ENCODE measurements at regions of chr3 and their contacts with region 1.

Region 1: DNA sequence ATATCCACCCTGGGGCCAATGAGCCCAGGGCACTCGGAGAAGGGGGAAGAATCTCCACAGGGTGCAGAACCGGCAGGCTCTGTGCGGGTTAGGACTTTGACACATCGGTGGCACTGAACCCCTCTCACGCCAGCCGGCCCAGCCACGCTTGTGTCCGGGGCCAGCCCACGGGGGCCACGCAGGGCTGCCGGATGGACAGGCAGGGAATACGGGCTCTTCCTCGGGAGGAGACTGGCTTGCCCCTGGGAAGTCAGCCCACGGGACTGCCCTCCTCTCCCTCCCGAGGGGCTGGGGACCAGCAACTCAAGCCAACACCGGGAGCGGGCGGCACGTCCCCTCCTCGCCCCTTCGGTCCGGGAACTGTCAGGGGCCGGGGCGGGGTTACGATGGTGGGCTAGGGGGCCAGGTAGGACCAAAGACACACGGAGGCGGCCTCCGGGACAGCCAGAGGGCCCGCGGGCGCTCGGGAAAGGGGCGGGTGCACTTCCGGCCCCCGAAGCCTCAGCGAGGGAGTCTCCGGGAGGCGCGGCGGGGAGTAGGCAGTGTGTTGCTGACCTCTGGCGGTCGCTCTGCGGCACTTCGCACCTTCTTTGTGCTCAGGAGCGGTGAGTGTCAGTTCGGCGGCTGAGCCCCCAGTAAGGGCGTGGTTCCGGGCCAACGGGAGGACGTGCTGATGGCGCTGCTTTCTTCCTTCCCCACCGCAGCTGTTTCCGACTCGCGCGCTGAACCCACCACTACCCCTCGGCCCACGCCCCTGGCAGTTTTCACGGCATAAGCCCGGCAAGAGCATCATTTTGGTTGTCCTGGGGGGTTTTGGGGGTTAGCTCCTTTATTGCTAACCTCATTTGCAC is 5.1 kb upstream of the CYP8B1 start:
- DNase-seq: peak; percentile 72 to 87 (median 80)
- H3K4me3 ChIP-seq: peak overlapping the region; percentile 50 to 99 (median 79)
- H3K27ac ChIP-seq: peak overlapping the region in 32 of 59 donors; percentile 8 to 88 (median 50)
- H3K27me3 ChIP-seq: no peaks in the 10 kb centered on the region
- CTCF ChIP-seq: peak; percentile 82 to 98 (median 94)

Region 2: DNA sequence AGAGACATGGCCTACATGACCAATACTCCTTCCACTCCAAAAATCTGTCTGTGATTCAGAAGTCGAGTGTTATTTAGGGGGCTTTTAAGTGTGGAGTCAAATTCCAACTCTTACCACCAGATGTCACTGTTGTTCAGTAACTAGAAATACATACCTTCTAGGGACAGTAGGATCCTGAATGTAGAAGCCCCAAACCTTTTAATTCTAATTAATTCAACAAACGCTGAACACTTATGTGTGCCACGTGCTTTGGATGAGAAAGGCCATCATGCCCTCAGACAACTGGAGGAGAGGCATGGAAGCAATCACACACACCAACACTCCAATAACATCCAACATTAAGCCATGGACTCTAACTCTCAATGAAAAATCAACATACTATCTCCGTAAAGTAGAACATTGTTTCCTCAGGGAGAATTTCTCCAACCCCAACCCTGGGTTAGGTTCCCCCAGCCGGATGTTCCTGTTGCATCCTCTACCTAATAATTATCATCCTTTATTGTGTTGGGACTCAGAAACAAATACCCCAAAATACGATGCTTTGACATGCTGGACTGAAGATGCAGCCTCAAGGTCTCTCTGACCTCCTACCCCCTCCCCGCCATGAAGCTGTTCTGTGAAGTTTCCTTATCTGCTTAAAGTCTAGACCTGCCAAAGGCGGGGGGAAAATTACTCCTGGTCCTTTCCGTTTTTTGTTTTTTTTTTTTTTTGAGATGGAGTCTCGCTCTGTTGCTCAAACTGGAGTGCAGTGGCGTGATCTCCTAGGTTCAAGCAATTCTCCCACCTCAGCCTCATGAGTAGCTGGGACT is 99.7 kb before region 1 on chr3:
- intact Hi-C with region 1: loop called (anchors 1 to 2 kb)
- DNase-seq: no peak
- H3K4me3 ChIP-seq: no peak overlapping the region
- H3K27ac ChIP-seq: no peak overlapping the region
- H3K27me3 ChIP-seq: no peaks in the 10 kb centered on the region
- CTCF ChIP-seq: peak; percentile 73 to 97 (median 89)

Region 3: GRCh38 chr3:42831321-42831713 is 49.5 kb before region 1 on chr3:
- intact Hi-C with region 1: loop called (anchors 5 to 10 kb)
- DNase-seq: peak; percentile 21 to 79 (median 59)
- H3K4me3 ChIP-seq: peak overlapping the region in 2 of 59 donors; percentile 6 to 23
- H3K27ac ChIP-seq: peak overlapping the region in 2 of 59 donors; percentile 26 to 53
- H3K27me3 ChIP-seq: no peaks in the 10 kb centered on the region
- CTCF ChIP-seq: peak; percentile 39 to 88 (median 77)

Region 4: GRCh38 chr3:42839616-42840015 is 41.2 kb before region 1 on chr3:
- intact Hi-C with region 1: loop called (anchors 5 to 10 kb)
- DNase-seq: peak in 7 of 10 donors; percentile 16 to 57 (median 48)
- H3K4me3 ChIP-seq: peak overlapping the region in 28 of 59 donors; percentile 2 to 55 (median 32)
- H3K27ac ChIP-seq: no peak overlapping the region
- H3K27me3 ChIP-seq: no peaks in the 10 kb centered on the region
- CTCF ChIP-seq: peak; percentile 58 to 86 (median 78)